CD8-positive, alpha-beta T cell (primary cell): ENCODE measurements at regions of chr11 and their contacts with region 1.

Region 1: DNA sequence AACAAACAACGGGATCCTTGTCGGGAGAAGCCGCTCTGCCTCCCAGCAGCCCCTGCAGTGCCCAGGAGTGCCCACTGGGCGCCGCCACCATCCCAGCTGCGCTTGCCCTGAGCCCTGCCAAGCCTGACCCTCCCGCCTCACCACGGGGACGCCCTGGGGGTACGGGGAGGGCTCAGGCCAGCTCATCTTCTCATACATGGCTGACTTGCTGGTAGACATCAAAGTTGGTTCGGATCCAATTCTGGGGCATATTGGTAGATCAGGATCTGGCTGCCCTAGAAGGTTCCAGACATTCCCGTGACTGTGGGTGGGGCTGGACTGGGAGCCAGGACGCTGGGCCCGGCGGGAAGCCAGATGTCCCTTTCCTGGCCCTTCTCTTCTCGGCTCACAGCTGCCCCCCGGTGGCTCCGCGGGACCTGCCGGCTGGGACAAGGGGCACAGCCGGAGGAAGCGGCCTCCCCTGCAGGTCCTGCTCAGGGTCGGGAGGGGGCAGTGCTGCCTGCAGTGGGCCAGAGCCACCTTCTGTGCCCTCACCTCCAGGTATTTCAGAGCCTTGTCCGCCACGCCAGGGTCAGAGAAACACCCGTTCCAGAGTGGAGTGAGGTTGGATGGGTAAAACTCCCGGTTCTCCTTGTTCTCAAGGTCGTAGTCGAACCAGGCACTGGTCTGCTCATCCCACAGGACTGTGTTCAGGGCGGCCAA is 10.6 kb upstream of the TREH start:
- DNase-seq: peak; percentile 67 to 92 (median 89)
- ATAC-seq: peak; percentile 85
- H3K4me3 ChIP-seq: peak overlapping the region; percentile 45 to 83
- H3K4me3 Mint-ChIP-seq: peak overlapping the region; percentile 74
- H3K27ac ChIP-seq: peak overlapping the region; percentile 40 to 51
- H3K27ac Mint-ChIP-seq: peak overlapping the region; percentile 87
- H3K4me1 ChIP-seq: peaks cover 54% of the 10 kb centered on the region
- H3K4me1 Mint-ChIP-seq: peaks cover 58% of the 10 kb centered on the region
- H3K27me3 ChIP-seq: no peaks in the 10 kb centered on the region
- H3K27me3 Mint-ChIP-seq: no peaks in the 10 kb centered on the region
- CTCF ChIP-seq: peak; percentile 98

Region 2: GRCh38 chr11:118488480-118489109 is 201.4 kb before region 1 on chr11:
- CTCF ChIA-PET with region 1: no interaction called
- POLR2A ChIA-PET with region 1: no interaction called
- intact Hi-C with region 1: no loop called
- DNase-seq: peak; percentile 66 to 88 (median 81)
- ATAC-seq: peak; percentile 77
- H3K4me3 ChIP-seq: no peak overlapping the region
- H3K4me3 Mint-ChIP-seq: no peak overlapping the region
- H3K27ac ChIP-seq: no peak overlapping the region
- H3K27ac Mint-ChIP-seq: no peak overlapping the region
- H3K4me1 ChIP-seq: no peaks in the 10 kb centered on the region
- H3K4me1 Mint-ChIP-seq: peaks cover 4% of the 10 kb centered on the region
- H3K27me3 ChIP-seq: no peaks in the 10 kb centered on the region
- H3K27me3 Mint-ChIP-seq: no peaks in the 10 kb centered on the region
- CTCF ChIP-seq: peak; percentile 93

Region 3: GRCh38 chr11:118705111-118705741 is 15.2 kb after region 1 on chr11:
- CTCF ChIA-PET with region 1: interaction called, 68 read pairs
- POLR2A ChIA-PET with region 1: interaction called, 44 read pairs
- intact Hi-C with region 1: loop called in 1 of 2 experiments (anchors 2 kb)
- DNase-seq: peak; percentile 17 to 84 (median 59)
- ATAC-seq: peak; percentile 75
- H3K4me3 ChIP-seq: peak overlapping the region in 1 of 2 experiments; percentile 2
- H3K4me3 Mint-ChIP-seq: peak overlapping the region; percentile 72
- H3K27ac ChIP-seq: peak overlapping the region; percentile 1 to 27
- H3K27ac Mint-ChIP-seq: peak overlapping the region; percentile 92
- H3K4me1 ChIP-seq: peaks cover 37% of the 10 kb centered on the region
- H3K4me1 Mint-ChIP-seq: peaks cover 50% of the 10 kb centered on the region
- H3K27me3 ChIP-seq: no peaks in the 10 kb centered on the region
- H3K27me3 Mint-ChIP-seq: no peaks in the 10 kb centered on the region
- CTCF ChIP-seq: no peak

Region 4: DNA sequence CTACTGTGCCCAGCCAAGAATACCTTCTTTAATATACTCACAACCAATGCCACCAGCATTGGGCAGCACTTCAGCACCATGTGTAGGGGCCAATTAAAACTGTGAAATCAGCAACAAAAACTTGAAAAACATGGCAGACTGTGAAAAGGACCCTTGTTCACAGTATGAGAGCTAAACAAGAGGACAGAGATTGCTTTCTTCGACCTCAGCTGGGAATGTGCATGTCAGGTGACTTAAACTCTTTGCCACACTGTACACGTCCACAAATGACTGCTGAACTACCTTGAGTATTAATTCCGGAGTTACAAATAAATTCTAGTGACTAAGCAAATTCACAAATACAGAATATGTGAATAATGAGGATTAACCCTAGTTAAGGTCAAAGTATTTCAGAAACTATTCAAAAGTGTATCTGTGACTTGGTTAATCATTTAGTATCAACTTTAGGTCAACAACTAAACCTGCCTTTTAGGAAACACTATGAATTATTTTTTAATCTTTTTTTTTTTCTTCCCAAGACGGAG is 67.9 kb after region 1 on chr11:
- CTCF ChIA-PET with region 1: interaction called, 45 read pairs
- POLR2A ChIA-PET with region 1: interaction called, 3 read pairs
- intact Hi-C with region 1: no loop called
- DNase-seq: no peak
- ATAC-seq: no peak
- H3K4me3 ChIP-seq: no peak overlapping the region
- H3K4me3 Mint-ChIP-seq: no peak overlapping the region
- H3K27ac ChIP-seq: no peak overlapping the region
- H3K27ac Mint-ChIP-seq: peak overlapping the region; percentile 33
- H3K4me1 ChIP-seq: no peaks in the 10 kb centered on the region
- H3K4me1 Mint-ChIP-seq: peaks cover 16% of the 10 kb centered on the region
- H3K27me3 ChIP-seq: no peaks in the 10 kb centered on the region
- H3K27me3 Mint-ChIP-seq: no peaks in the 10 kb centered on the region
- CTCF ChIP-seq: no peak

Region 5: GRCh38 chr11:118771547-118772288 is 81.7 kb after region 1 on chr11:
- CTCF ChIA-PET with region 1: interaction called, 56 read pairs
- POLR2A ChIA-PET with region 1: interaction called, 4 read pairs
- intact Hi-C with region 1: no loop called
- DNase-seq: no peak
- ATAC-seq: no peak
- H3K4me3 ChIP-seq: no peak overlapping the region
- H3K4me3 Mint-ChIP-seq: peak overlapping the region; percentile 63
- H3K27ac ChIP-seq: peak overlapping the region in 1 of 2 experiments; percentile 0
- H3K27ac Mint-ChIP-seq: peak overlapping the region; percentile 71
- H3K4me1 ChIP-seq: peaks cover 78% of the 10 kb centered on the region
- H3K4me1 Mint-ChIP-seq: peaks cover 89% of the 10 kb centered on the region
- H3K27me3 ChIP-seq: no peaks in the 10 kb centered on the region
- H3K27me3 Mint-ChIP-seq: no peaks in the 10 kb centered on the region
- CTCF ChIP-seq: no peak

Region 6: GRCh38 chr11:118895142-118896039 is 205.4 kb after region 1 on chr11:
- CTCF ChIA-PET with region 1: interaction called, 22 read pairs
- POLR2A ChIA-PET with region 1: interaction called, 3 read pairs
- intact Hi-C with region 1: no loop called
- DNase-seq: peak; percentile 54 to 92 (median 80)
- ATAC-seq: peak; percentile 73
- H3K4me3 ChIP-seq: peak overlapping the region in 1 of 2 experiments; percentile 35
- H3K4me3 Mint-ChIP-seq: peak overlapping the region; percentile 63
- H3K27ac ChIP-seq: peak overlapping the region; percentile 70 to 77
- H3K27ac Mint-ChIP-seq: peak overlapping the region; percentile 95
- H3K4me1 ChIP-seq: peaks cover 83% of the 10 kb centered on the region
- H3K4me1 Mint-ChIP-seq: peaks cover 84% of the 10 kb centered on the region
- H3K27me3 ChIP-seq: no peaks in the 10 kb centered on the region
- H3K27me3 Mint-ChIP-seq: no peaks in the 10 kb centered on the region
- CTCF ChIP-seq: no peak

Region 7: GRCh38 chr11:118907051-118908042 is 217.3 kb after region 1 on chr11:
- CTCF ChIA-PET with region 1: interaction called, 13 read pairs
- POLR2A ChIA-PET with region 1: no interaction called
- intact Hi-C with region 1: no loop called
- DNase-seq: peak; percentile 79 to 94 (median 87)
- ATAC-seq: peak; percentile 41
- H3K4me3 ChIP-seq: no peak overlapping the region
- H3K4me3 Mint-ChIP-seq: peak overlapping the region; percentile 53
- H3K27ac ChIP-seq: peak overlapping the region; percentile 2 to 61
- H3K27ac Mint-ChIP-seq: peak overlapping the region; percentile 92
- H3K4me1 ChIP-seq: peaks cover 58% of the 10 kb centered on the region
- H3K4me1 Mint-ChIP-seq: peaks cover 58% of the 10 kb centered on the region
- H3K27me3 ChIP-seq: no peaks in the 10 kb centered on the region
- H3K27me3 Mint-ChIP-seq: no peaks in the 10 kb centered on the region
- CTCF ChIP-seq: peak; percentile 91